ENCODE measurements at regions of chr6 and their contacts with region 1.

Region 1: GRCh38 chr6:20564777-20565176 is 30.5 kb downstream of the CDKAL1 start:
- DNase-seq: no peak
- H3K4me3 ChIP-seq: no peak overlapping the region
- H3K27ac ChIP-seq: no peak overlapping the region
- H3K4me1 ChIP-seq: peaks cover 0 to 12% (median 0%) of the 10 kb centered on the region in 3 donors
- H3K27me3 ChIP-seq: no peaks in the 10 kb centered on the region
- CTCF ChIP-seq: no peak
- POLR2A ChIP-seq: no peak

Region 2: GRCh38 chr6:21578523-21578922 is 1013.7 kb after region 1 on chr6:
- intact Hi-C with region 1: no loop called
- DNase-seq: no peak
- H3K4me3 ChIP-seq: no peak overlapping the region
- H3K27ac ChIP-seq: no peak overlapping the region
- H3K4me1 ChIP-seq: no peaks in the 10 kb centered on the region
- H3K27me3 ChIP-seq: no peaks in the 10 kb centered on the region
- CTCF ChIP-seq: no peak
- POLR2A ChIP-seq: no peak

Region 3: GRCh38 chr6:21589352-21590345 is 1024.9 kb after region 1 on chr6:
- intact Hi-C with region 1: loop called (anchors 5 kb)
- DNase-seq: peak; percentile 6
- H3K4me3 ChIP-seq: peak overlapping the region; percentile 42 to 81 (median 75)
- H3K27ac ChIP-seq: peak overlapping the region; percentile 79 to 95 (median 92)
- H3K4me1 ChIP-seq: peaks cover 6 to 36% (median 6%) of the 10 kb centered on the region in 3 donors
- H3K27me3 ChIP-seq: no peaks in the 10 kb centered on the region
- CTCF ChIP-seq: peak; percentile 80 to 90 (median 86)
- POLR2A ChIP-seq: no peak